ENCODE measurements at regions of chr7 and their contacts with region 1.

Region 1: GRCh38 chr7:100611974-100612729 is at the start of gene MOSPD3:
- DNase-seq: peak; percentile 99 to 100 (median 99)
- H3K4me3 ChIP-seq: peak within 1 kb of the TSS; percentile 75 to 91 (median 84)
- H3K27ac ChIP-seq: peak within 1 kb of the TSS; percentile 40 to 88
- H3K4me1 ChIP-seq: peaks cover 4 to 24% (median 19%) of the 10 kb centered on the region in 4 experiments
- H3K27me3 ChIP-seq: peaks cover 0 to 2% (median 0%) of the 10 kb centered on the region in 5 experiments

Region 2: DNA sequence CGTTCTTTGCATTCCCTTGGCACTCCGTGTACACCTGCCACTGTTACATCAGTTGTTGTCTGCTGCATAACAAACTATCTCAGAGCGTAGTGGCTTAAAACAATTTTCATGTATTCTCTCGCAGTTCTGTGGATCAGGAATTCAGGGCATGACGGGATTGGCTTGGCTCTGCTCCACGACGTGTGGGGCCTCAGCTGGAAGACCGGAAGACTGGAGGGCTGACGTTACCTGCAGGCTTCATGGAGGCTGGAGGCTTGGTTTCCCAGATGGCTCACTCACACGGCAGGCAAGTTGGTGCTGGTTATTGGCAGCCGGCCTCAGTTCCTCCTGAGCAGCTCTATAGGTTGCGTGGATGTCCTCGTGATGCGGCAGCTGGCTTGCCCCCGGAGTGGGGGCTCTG is 102.9 kb before region 1 on chr7:
- CTCF ChIA-PET with region 1: no interaction called
- POLR2A ChIA-PET with region 1: no interaction called
- DNase-seq: no peak
- H3K4me3 ChIP-seq: no peak overlapping the region
- H3K27ac ChIP-seq: no peak overlapping the region
- H3K4me1 ChIP-seq: peaks cover 0 to 3% (median 0%) of the 10 kb centered on the region in 4 experiments
- H3K27me3 ChIP-seq: no peaks in the 10 kb centered on the region

Region 3: DNA sequence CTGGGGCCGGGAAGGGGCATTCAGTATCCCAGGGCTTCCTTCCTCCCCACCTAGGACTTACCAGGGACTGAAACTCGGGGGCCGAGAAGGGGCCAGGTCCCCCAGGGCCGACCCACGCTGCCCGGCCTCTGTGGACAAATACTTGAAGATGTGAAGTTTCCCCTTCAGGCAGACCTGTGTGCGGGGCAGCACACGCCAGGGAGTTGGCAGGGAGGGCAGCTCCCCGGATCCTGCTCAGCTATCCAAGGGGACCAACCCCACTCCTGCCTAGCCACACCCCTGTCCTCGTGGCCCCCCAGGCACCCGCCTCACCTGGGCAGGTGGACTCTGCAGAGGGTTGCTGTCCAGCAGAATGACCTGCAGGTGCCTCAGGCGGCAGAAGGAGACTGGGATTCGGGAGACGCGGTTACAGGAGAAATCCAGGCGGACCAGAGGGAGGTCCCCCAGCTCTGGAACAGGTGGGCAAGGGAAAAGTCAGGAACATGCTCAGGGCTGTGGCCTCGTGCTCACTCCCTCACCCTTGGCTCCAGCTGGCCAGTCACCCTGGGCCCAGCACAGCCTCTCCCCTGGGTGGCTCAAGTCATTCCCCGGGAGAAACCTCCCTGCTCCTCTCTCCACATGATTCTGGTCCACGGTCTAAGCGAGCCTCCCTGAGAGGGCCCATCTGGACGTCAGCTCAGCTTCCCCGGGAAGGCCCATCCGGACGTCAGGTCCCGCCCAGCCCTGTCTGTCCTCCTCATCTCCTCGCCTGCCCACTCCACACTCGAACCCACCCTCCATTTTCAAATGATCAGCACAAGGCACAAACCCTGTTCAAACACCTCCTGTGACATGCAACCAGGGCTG is 33.6 kb before region 1 on chr7:
- CTCF ChIA-PET with region 1: no interaction called
- POLR2A ChIA-PET with region 1: no interaction called
- DNase-seq: no peak
- H3K4me3 ChIP-seq: no peak overlapping the region
- H3K27ac ChIP-seq: no peak overlapping the region
- H3K4me1 ChIP-seq: peaks cover 6 to 27% (median 22%) of the 10 kb centered on the region in 4 experiments
- H3K27me3 ChIP-seq: no peaks in the 10 kb centered on the region

Region 4: GRCh38 chr7:100626530-100627237 is 14.5 kb after region 1 on chr7:
- CTCF ChIA-PET with region 1: interaction called, 20 read pairs
- POLR2A ChIA-PET with region 1: interaction called, 3 read pairs
- DNase-seq: peak; percentile 82 to 88 (median 88)
- H3K4me3 ChIP-seq: peak overlapping the region in 5 of 7 experiments; percentile 19 to 69 (median 38)
- H3K27ac ChIP-seq: no peak overlapping the region
- H3K4me1 ChIP-seq: peaks cover 0 to 13% (median 10%) of the 10 kb centered on the region in 4 experiments
- H3K27me3 ChIP-seq: no peaks in the 10 kb centered on the region

Region 5: DNA sequence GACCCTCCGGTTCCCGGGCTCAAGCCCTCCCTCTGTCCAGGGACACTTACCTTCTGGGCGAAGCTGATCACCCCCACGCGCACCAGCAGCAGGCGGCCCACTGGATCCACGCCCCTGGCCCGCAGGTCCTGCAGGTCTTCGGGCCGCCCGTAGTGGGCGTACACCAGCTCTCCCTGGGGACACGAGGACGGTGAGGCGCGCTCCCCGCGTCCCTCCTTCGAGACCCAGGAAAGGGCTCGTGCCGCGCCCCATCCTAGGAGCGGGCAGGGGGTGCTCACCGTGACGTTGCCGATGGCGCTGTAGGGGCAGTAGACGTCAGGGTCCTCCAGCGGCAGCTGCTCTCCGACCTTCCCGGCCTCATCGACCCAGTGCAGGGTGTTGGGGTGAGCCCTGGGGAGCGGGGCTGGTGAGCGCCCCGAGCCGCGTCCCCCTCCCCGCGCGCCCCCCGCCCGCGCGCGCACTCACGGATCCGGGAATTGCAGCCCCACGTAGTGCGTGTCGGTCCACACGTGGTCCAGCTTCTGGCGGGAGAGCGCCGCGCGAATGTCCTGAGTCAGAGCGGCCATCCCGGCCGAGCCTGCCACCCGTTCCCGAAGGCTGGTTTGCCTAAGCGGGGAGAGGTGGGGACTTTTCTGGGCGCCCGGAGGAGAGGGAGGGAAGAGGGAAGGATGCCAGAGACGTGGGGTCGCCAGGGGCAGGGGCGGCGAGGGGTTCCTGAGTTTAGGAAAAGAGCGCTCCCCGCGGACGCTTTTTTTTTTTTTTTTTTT is 21.0 kb after region 1 on chr7:
- CTCF ChIA-PET with region 1: interaction called, 20 read pairs
- POLR2A ChIA-PET with region 1: interaction called, 3 read pairs
- DNase-seq: peak; percentile 57 to 73 (median 68)
- H3K4me3 ChIP-seq: peak overlapping the region; percentile 13 to 78 (median 58)
- H3K27ac ChIP-seq: no peak overlapping the region
- H3K4me1 ChIP-seq: peaks cover 0 to 14% (median 11%) of the 10 kb centered on the region in 4 experiments
- H3K27me3 ChIP-seq: no peaks in the 10 kb centered on the region